Endothelial cell of umbilical vein (primary cell): ENCODE measurements at regions of chr3 and their contacts with region 1.

Region 1: DNA sequence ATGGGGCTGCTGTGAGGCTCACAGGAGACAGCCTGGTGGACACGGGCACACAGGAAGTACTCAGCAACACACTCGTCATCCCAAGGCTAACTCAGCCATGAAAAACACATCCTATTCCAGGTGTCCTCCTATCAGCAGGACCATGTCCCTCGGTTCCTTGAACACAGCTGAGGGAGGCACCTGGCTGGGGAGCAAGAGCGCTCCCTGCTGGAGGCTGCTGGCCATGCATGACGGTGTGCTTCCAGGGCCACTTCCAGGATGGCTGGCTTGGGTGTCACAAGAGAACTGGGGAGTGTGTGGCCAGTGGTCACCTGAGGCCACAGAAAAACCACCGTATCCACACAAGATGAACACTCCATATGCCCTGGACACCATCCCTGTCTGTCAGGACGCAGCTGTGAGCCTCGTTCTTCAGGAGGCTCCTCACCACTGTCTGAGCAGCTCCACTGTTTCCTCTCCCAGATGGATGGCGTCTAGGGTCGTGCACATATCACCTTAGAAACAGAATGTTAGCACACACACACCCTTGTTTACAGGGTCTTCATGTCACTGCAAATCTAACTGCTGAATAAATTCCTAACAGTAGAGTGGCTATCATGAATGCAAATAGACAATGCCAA is 31.0 kb downstream of the POC1A start:
- DNase-seq: peak; percentile 81
- H3K4me3 ChIP-seq: no peak overlapping the region
- H3K27ac ChIP-seq: no peak overlapping the region
- H3K4me1 ChIP-seq: peaks cover 16% of the 10 kb centered on the region
- H3K27me3 ChIP-seq: no peaks in the 10 kb centered on the region
- CTCF ChIP-seq: peak; percentile 97 to 98
- POLR2A ChIP-seq: no peak

Region 2: DNA sequence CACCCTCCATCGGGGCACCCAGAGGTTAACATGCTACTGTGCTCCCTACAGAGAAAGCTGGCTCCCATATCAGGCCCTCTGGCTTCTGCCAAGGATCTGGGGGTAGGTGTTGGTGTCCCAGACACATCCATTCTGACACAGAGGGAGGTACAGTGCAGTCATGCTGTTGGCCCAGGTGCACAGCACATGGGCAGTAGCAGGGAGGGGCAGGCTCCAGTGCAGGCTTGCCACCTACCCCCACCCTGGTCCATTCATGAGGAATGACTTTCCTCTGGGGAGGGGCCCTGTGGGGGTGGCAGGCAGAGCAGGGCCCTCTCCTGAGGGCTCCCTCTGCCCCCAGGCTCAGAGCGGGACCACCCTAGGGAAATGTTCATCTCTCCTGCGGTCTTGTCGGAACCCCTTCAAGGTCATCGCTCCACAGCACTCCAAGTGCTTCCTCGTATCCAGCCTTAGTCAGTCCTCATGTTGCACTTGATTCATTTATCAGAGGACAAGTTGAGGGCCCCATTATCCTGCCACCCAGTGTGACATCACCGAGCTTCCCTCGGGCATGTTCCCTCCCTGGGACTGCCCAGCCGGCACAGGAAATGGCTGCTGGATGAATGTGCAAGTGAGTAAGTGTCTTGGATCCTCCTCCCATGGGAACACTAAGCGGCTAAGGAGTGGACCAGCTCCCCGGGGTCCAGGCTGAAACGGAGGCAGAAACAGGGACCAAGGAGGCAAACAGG is 76.9 kb before region 1 on chr3:
- CTCF ChIA-PET with region 1: interaction called, 180 read pairs
- POLR2A ChIA-PET with region 1: no interaction called
- dilution Hi-C with region 1: no loop called
- intact Hi-C with region 1: no loop called
- DNase-seq: peak; percentile 96
- H3K4me3 ChIP-seq: no peak overlapping the region
- H3K27ac ChIP-seq: peak overlapping the region; percentile 86
- H3K4me1 ChIP-seq: peaks cover 28% of the 10 kb centered on the region
- H3K27me3 ChIP-seq: no peaks in the 10 kb centered on the region
- CTCF ChIP-seq: no peak
- POLR2A ChIP-seq: peak; percentile 75

Region 3: DNA sequence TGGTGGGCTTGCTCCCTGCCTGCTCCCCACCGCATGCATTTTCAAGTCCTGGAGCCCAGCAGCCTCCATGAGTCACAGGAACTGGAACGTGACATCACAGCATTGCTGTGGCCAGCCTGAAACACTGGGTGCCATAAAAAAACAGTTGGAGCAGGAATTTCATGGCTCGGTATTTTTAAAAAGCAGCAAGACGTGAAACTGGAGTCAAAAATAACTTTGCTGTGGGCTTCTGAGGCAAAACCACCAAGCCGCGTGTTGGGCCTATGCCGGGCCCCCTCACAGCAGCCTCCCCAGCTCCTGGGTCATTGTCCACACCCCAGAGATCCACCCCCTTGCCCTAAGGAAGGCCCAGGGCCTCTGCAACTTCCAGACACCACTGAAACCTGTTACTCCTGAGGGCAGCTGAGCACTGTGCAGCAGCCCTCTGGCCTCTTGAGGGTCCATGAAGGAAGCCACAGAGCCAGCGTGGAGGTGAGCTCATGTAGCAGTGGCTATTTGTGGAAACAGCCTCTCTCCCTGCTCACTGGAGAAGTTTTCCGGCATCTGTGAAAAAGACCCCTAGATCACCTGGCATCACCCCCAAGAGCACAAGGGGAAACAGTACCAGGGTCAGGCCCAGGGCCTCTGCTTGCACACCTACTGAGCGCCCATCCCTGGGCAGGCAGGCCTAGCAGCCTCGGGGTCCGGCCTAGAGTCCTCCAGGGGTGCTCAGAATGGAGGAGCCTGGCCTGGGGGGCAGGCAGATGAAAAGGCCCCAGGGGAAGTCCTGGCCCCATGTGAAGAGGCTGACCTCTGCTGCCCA is 32.9 kb before region 1 on chr3:
- CTCF ChIA-PET with region 1: interaction called, 19 read pairs
- POLR2A ChIA-PET with region 1: no interaction called
- dilution Hi-C with region 1: no loop called
- intact Hi-C with region 1: loop called (anchors 2 kb)
- DNase-seq: peak; percentile 79
- H3K4me3 ChIP-seq: no peak overlapping the region
- H3K27ac ChIP-seq: peak overlapping the region; percentile 96
- H3K4me1 ChIP-seq: peaks cover 58% of the 10 kb centered on the region
- H3K27me3 ChIP-seq: no peaks in the 10 kb centered on the region
- CTCF ChIP-seq: no peak
- POLR2A ChIP-seq: no peak

Region 4: DNA sequence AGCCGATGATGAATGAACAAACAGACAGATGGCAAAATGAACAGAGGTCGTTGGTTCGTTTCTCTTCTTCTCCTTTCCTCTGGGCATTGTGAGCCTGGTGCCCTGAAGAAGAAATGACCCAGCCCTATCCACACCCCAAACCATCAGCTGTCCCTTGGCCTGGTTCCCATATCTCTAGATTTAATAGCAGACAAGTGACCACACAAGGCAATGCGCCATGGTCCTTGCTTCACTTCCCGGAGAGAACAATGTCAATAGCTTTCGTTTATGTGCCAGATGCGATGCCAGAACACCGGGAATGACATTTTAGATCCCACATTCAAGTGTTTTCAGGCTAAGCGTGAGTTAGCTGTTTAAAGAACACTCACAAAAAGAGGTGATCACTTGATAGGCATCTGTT is 13.3 kb after region 1 on chr3:
- CTCF ChIA-PET with region 1: interaction called, 11 read pairs
- POLR2A ChIA-PET with region 1: no interaction called
- dilution Hi-C with region 1: no loop called
- intact Hi-C with region 1: no loop called
- DNase-seq: peak; percentile 32
- H3K4me3 ChIP-seq: no peak overlapping the region
- H3K27ac ChIP-seq: no peak overlapping the region
- H3K4me1 ChIP-seq: peaks cover 9% of the 10 kb centered on the region
- H3K27me3 ChIP-seq: no peaks in the 10 kb centered on the region
- CTCF ChIP-seq: no peak
- POLR2A ChIP-seq: no peak

Region 5: GRCh38 chr3:52144034-52144795 is 21.0 kb after region 1 on chr3:
- CTCF ChIA-PET with region 1: interaction called, 17 read pairs
- POLR2A ChIA-PET with region 1: no interaction called
- dilution Hi-C with region 1: no loop called
- intact Hi-C with region 1: loop called (anchors 1 kb)
- DNase-seq: peak; percentile 63
- H3K4me3 ChIP-seq: no peak overlapping the region
- H3K27ac ChIP-seq: no peak overlapping the region
- H3K4me1 ChIP-seq: no peaks in the 10 kb centered on the region
- H3K27me3 ChIP-seq: no peaks in the 10 kb centered on the region
- CTCF ChIP-seq: peak; percentile 93 to 94
- POLR2A ChIP-seq: no peak